Psoas muscle (tissue), 8 donors: ENCODE measurements at regions of chr15 and their contacts with region 1.

Region 1: GRCh38 chr15:93997084-93997918 is 234.1 kb upstream of the MCTP2 start:
- DNase-seq: no peak
- ATAC-seq: no peak
- H3K4me3 ChIP-seq: no peak overlapping the region
- H3K27ac ChIP-seq: no peak overlapping the region
- H3K4me1 ChIP-seq: no peaks in the 10 kb centered on the region
- H3K27me3 ChIP-seq: no peaks in the 10 kb centered on the region
- CTCF ChIP-seq: peak; percentile 51

Region 2: GRCh38 chr15:93826790-93827189 is 170.5 kb before region 1 on chr15:
- intact Hi-C with region 1: no loop called
- DNase-seq: peak in 1 of 2 donors; percentile 58
- ATAC-seq: peak; percentile 26 to 77 (median 30)
- H3K4me3 ChIP-seq: no peak overlapping the region
- H3K27ac ChIP-seq: no peak overlapping the region
- H3K4me1 ChIP-seq: no peaks in the 10 kb centered on the region
- H3K27me3 ChIP-seq: no peaks in the 10 kb centered on the region
- CTCF ChIP-seq: no peak

Region 3: DNA sequence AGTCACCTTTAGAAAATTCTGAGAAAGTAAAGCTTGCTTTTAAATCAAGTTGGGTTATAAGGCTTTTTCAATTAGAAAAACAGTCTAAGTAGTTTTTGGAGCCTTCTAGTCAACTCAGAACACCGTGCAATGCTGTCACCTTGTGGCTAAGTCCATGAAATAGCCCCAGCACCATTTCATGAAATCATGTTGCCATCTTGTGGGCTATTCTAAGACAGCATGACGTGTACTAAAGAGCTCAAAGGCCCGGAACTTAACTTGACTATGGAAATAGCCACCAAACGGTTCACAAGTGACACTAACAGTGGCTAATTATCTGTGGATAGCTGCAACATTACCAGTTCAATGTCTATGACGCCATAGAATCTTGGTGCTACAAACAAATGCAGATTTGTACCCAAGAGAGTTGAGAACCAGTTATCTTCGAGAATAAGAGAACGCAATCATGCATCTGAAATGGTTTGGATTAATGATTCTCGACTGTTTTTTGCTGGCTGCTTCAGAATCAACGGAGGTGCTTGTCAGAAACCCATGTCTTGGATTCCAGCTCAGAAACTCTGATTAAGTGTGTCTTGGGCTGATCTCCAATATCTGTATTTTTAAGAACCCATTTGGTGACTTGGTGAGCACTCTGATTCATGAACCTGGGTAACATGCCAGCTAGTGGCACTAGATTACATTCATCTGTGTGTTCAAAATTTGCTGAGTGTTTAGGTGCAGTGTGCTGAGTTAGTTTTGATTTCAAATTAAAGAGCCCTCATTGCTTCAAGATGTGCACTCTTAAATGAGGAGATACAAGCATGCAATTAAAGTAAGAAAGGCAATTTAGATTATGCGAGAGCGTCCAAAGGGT is 122.8 kb after region 1 on chr15:
- intact Hi-C with region 1: loop called in 1 of 2 experiments (anchors 5 kb)
- DNase-seq: peak in 1 of 2 donors; percentile 25
- ATAC-seq: peak; percentile 99 to 100 (median 99)
- H3K4me3 ChIP-seq: no peak overlapping the region
- H3K27ac ChIP-seq: peak overlapping the region; percentile 13
- H3K4me1 ChIP-seq: no peaks in the 10 kb centered on the region
- H3K27me3 ChIP-seq: no peaks in the 10 kb centered on the region
- CTCF ChIP-seq: peak; percentile 90